ENCODE measurements at regions of chr2 and their contacts with region 1.

Region 1: DNA sequence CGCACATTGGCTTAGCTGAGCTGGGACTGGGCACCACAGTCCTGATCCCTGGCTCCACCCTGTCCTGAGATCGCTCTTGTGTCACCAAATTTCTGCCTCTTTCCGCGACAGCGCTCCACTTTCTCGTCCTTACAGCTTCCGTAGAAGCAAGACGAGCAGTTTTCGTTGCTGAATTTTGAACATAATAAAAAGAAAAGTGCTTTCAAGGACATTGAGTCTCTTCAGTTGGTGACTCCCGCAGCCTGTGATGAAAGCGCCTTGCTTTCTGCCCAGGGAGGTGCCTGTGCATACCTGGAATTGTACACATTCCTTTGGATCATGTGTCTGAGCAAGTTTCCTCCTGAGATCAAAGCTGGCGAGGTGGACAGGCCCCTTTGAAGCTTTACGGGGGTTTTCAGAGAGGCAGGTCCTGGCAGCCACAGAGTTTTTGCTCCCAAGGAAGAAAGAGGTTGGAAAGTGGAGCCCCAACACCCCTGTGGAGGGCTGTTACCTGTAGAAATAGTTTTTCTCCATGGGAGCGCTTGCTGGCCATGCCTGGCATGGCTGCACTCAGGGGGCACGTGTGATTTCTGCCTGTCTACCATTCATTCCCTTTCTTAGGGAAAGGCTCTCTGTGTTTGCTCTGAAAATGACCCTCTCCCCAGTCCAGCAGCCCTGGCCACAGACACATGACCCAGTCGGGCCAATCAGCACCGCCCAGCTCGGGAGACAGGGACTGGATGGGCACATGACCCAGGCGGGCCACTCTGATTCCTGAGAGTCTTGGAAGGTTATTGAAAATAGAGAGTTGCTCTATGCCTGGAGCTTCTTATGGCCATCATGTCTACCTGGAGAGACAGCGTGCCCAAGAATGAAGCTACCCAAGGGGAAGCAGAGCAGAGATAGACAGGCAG is 115.6 kb upstream of the OTOS start:
- DNase-seq: peak; percentile 49 to 59
- ATAC-seq: peak in 2 of 4 donors; percentile 20 to 37
- H3K4me3 ChIP-seq: no peak overlapping the region
- H3K27ac ChIP-seq: peak overlapping the region; percentile 63
- H3K4me1 ChIP-seq: peaks cover 61% of the 10 kb centered on the region
- H3K27me3 ChIP-seq: no peaks in the 10 kb centered on the region
- CTCF ChIP-seq: no peak

Region 2: GRCh38 chr2:240143801-240144648 is 112.0 kb before region 1 on chr2:
- intact Hi-C with region 1: no loop called
- DNase-seq: peak; percentile 68 to 87
- ATAC-seq: peak; percentile 88 to 96 (median 94)
- H3K4me3 ChIP-seq: no peak overlapping the region
- H3K27ac ChIP-seq: no peak overlapping the region
- H3K4me1 ChIP-seq: no peaks in the 10 kb centered on the region
- H3K27me3 ChIP-seq: no peaks in the 10 kb centered on the region
- CTCF ChIP-seq: peak; percentile 98

Region 3: DNA sequence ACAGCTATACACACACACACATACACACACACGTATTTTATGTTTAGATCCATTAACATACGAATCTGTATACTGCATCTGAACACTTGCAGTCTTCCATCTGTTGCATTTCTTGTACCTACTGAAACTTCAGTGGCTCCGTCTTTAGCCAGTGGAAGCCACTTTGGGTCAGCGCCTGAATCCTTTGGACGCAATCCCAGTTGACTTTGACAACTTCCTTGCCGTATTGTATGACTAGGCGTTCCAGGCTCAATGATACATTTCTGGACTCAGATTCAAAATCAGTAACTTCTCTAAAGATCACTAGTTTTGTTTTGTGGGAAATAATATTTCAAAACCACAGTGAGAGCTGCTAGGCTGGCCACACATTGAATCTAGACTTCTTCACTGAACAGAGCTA is 77.9 kb after region 1 on chr2:
- intact Hi-C with region 1: no loop called
- DNase-seq: no peak
- ATAC-seq: peak in 3 of 4 donors; percentile 63 to 85 (median 63)
- H3K4me3 ChIP-seq: no peak overlapping the region
- H3K27ac ChIP-seq: no peak overlapping the region
- H3K4me1 ChIP-seq: no peaks in the 10 kb centered on the region
- H3K27me3 ChIP-seq: no peaks in the 10 kb centered on the region
- CTCF ChIP-seq: no peak

Region 4: GRCh38 chr2:240369801-240370585 is 113.9 kb after region 1 on chr2:
- intact Hi-C with region 1: loop called (anchors 5 kb)
- DNase-seq: peak; percentile 89 to 95
- ATAC-seq: peak; percentile 80 to 86 (median 84)
- H3K4me3 ChIP-seq: no peak overlapping the region
- H3K27ac ChIP-seq: peak overlapping the region; percentile 94
- H3K4me1 ChIP-seq: peaks cover 72% of the 10 kb centered on the region
- H3K27me3 ChIP-seq: no peaks in the 10 kb centered on the region
- CTCF ChIP-seq: no peak

Region 5: DNA sequence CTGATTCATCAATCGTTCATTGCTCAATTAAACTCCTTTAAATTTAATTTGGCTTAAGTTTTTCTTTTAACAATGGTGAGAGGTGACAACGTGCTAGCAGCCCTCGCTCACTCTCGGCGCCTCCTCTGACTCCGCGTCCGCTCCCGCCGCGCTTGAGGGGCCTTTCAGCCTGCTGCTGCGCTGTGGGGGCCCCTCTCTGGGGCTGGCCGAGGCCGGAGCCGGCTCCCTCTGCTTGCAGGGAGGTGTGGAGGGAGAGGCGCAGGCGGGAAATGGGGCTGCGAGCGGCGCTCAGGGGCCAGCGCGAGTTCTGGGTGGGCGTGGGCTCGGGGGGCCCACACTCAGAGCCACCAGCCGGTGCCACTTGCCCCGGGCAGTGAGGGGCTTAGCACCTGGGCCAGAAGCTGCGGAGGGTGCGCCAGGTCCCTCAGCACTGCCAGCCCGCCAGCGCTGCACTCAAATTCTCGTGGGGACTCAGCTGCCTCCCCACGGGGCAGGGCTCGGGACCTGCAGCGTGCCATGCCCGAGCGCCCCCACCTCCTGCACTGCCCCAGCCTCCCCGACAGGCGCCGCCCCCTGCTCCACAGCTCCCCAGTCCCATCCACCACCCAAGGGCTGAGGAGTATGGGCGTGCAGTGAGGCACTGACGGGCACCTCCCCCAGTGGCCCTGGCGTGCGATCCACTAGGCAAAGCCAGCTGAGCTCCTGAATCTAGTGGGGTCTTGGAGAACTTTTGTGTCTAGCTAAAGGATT is 282.1 kb after region 1 on chr2:
- intact Hi-C with region 1: no loop called
- DNase-seq: no peak
- ATAC-seq: no peak
- H3K4me3 ChIP-seq: no peak overlapping the region
- H3K27ac ChIP-seq: no peak overlapping the region
- H3K4me1 ChIP-seq: no peaks in the 10 kb centered on the region
- H3K27me3 ChIP-seq: no peaks in the 10 kb centered on the region
- CTCF ChIP-seq: no peak

Region 6: DNA sequence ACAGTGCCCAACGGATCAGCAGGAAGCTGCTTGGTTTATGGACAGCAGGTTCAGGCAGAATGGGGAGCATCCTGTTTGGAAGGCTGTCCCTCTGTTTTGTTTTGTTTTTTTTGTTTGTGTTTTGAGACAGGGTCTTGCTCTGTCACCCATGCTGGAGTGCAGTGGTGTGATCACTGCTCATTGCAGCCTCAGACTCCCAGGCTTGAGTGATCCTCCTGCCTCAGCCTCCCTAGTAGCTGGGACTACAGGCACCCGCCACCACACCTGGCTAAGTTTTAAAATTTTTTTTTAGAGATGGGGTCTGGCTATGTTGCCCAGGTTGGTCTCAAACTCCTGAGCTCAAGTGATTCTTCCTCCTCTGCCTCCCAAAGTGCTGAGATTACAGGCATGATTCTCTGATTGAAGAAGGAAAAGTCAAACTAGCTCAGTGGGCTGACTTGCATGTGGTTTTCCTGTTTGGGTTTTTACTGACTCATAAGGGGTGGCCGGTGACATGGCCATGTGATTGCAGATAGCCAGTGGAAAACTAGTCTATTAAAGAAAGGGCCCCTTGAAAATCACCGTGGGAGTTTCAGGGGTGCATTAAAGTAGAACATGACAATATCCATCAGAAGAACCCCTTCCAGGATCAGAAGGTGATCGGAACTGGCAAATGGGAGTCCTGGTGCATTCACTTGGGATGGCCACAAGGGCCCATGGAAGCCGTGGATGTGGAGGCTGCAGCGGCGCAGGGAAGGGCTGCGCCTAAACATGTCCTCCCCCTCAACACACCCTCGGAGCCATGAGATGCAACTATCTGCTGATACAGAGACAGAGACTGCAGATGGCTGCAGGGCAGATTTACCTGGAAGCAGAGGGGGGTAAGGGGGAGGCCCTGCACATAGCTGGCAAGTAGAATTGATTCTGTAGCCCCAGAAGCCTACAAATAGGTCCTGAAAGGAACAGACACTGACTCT is 400.2 kb after region 1 on chr2:
- intact Hi-C with region 1: no loop called
- DNase-seq: no peak
- ATAC-seq: no peak
- H3K4me3 ChIP-seq: no peak overlapping the region
- H3K27ac ChIP-seq: no peak overlapping the region
- H3K4me1 ChIP-seq: no peaks in the 10 kb centered on the region
- H3K27me3 ChIP-seq: peaks cover 0 to 21% (median under 1%) of the 10 kb centered on the region in 3 donors
- CTCF ChIP-seq: no peak

Measured in psoas muscle (tissue), 8 donors.